Left lung (tissue), 14 donors: ENCODE measurements at regions of chrX and their contacts with region 1.

Region 1: GRCh38 chrX:87338510-87338909 is 179.1 kb upstream of the KLHL4 start:
- DNase-seq: peak in 1 of 4 donors; percentile 13
- ATAC-seq: peak; percentile 49
- H3K4me3 ChIP-seq: no peak overlapping the region
- H3K27ac ChIP-seq: no peak overlapping the region
- H3K4me1 ChIP-seq: no peaks in the 10 kb centered on the region
- H3K27me3 ChIP-seq: no peaks in the 10 kb centered on the region
- CTCF ChIP-seq: peak in 1 of 2 donors; percentile 33

Region 2: GRCh38 chrX:87664381-87664780 is 325.9 kb after region 1 on chrX:
- intact Hi-C with region 1: loop called in 1 of 2 experiments (anchors 10 kb)
- DNase-seq: peak in 2 of 4 donors; percentile 17 to 25
- ATAC-seq: peak; percentile 61
- H3K4me3 ChIP-seq: no peak overlapping the region
- H3K27ac ChIP-seq: no peak overlapping the region
- H3K4me1 ChIP-seq: no peaks in the 10 kb centered on the region
- H3K27me3 ChIP-seq: no peaks in the 10 kb centered on the region
- CTCF ChIP-seq: peak in 1 of 2 donors; percentile 25